Panc1 (cell line): ENCODE measurements at regions of chr11 and their contacts with region 1.

Region 1: DNA sequence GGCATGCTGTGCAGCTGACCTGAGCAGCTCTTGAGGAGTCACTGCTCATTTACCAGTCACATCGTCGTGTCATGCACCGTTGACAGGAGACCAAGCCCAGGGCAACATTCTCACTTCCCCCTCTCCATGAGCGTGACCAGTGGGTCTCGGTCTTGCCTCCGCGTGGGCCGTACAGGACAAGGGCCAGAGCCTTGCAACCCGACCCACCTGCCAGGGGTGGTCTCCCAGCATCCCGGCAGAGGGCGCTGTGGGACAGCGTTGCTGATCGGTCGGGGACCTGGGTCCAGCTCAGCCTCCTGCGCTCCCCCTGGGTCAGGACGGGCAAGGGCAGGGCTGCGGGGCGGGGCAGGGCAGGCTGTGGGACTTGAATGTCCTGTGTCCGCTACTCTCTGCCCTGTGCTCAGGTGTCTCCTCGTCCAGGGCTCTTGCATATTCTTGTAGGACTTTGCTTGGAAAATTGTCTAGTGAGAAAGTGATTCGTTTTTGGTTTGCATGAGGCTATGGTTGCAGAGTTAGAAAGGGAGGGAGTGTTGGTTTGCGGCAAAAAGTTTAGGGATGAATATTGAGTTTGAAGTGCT is 16.2 kb downstream of the EIF4G2 start:
- DNase-seq: no peak
- ATAC-seq: peak; percentile 95
- H3K4me3 ChIP-seq: peak overlapping the region in 1 of 2 experiments; percentile 40; a peak in 2 of 4 replicates
- H3K27ac ChIP-seq: peak overlapping the region; percentile 46; the same call in 1 of the 2 replicates
- H3K4me1 ChIP-seq: peaks cover 20% of the 10 kb centered on the region
- H3K27me3 ChIP-seq: no peaks in the 10 kb centered on the region
- CTCF ChIP-seq: peak; percentile 100

Region 2: DNA sequence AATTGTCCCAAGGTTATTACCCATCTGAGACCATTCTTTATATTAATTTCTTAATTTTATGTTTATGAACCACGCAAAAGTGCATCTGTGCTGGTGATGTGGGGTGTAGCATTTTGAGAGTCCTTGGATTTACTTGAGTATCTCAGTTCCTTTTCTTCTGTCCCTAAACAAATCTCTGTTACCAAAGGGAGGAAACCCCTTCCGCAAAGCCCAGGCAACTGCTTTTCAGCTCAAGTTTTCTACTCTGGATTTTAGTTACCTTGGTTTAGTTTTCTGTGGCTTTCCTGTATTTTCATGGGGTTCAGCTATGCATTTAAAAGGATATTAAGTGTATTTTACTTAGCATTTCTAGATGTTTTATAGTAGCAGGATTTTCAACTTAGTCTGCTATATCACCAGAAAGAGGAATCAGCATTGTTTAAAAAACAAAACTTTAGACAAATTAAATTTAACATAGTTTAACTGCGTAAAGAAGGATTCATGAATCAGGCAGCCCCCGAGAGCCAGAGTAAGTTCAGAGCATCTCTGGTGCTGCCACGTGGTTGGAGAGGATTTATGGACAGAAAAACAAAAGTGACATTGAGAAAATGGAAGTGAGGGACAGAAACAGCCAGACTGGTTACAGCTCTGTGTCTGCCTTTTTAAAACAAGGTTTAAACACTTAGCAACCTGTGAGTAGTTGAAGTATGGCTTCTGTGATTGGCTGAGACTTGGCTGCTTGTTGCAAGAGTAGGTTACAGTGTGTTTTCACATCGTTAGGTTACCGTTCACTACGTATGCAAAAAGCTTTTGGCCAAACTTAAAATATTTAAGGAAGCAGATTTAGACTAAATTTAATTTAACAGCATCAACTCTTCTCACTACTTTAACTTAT is 478.1 kb before region 1 on chr11:
- CTCF ChIA-PET with region 1: no interaction called
- POLR2A ChIA-PET with region 1: interaction called, 11 read pairs
- in situ Hi-C with region 1: no loop called
- intact Hi-C with region 1: no loop called
- DNase-seq: no peak
- ATAC-seq: peak; percentile 95
- H3K4me3 ChIP-seq: peak overlapping the region; percentile 7 to 38; a peak in 3 of 4 replicates
- H3K27ac ChIP-seq: peak overlapping the region; percentile 88
- H3K4me1 ChIP-seq: peaks cover 52% of the 10 kb centered on the region
- H3K27me3 ChIP-seq: no peaks in the 10 kb centered on the region
- CTCF ChIP-seq: no peak

Region 3: DNA sequence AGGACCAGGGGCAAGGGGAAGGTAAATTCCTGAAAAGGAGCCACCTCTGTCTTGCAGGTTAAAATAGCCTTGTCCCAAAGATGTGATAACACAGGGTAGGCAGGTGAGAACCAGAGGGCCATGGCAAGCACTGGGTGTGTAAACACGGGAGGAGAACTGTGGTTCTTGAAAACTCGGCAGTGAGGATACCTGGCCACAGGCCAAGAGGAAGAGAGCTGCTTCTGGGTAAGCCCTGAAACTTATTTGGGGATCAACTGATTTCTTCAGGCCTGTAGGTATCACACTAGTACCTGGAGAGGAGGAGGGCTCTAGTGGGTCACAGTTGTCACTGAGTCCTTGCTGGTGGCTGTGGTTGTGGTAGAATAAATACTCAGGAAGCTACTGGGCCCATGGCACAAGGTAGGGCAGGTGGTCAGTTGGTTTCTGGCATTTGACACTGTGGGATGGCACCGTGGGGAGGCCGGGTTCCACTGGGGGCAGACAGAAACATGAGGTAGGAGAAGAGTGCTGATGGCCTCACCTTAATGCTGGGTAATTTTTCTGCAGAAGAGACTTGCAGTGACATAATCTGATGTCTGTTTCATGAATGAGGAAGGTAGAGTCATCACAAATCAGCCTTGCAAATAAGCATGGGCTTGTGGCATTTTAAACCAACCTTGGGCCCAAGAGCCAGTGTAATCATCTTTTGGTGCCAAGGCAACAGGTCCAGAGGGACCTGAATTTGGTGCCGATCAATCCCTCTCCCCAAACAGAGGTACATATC is 315.4 kb before region 1 on chr11:
- CTCF ChIA-PET with region 1: no interaction called
- POLR2A ChIA-PET with region 1: interaction called, 10 read pairs
- in situ Hi-C with region 1: no loop called
- intact Hi-C with region 1: no loop called
- DNase-seq: no peak
- ATAC-seq: 0 out of 2 replicates have a peak, but pooled peaks have one; percentile 26
- H3K4me3 ChIP-seq: no peak overlapping the region
- H3K27ac ChIP-seq: no peak overlapping the region
- H3K4me1 ChIP-seq: no peaks in the 10 kb centered on the region
- H3K27me3 ChIP-seq: no peaks in the 10 kb centered on the region
- CTCF ChIP-seq: no peak

Region 4: GRCh38 chr11:10750838-10751580 is 41.5 kb before region 1 on chr11 and contains the start of gene CTR9:
- CTCF ChIA-PET with region 1: interaction called, 16 read pairs
- POLR2A ChIA-PET with region 1: no interaction called
- in situ Hi-C with region 1: no loop called
- intact Hi-C with region 1: no loop called
- DNase-seq: peak; percentile 94
- ATAC-seq: peak; percentile 99
- H3K4me3 ChIP-seq: peak within 1 kb of the TSS; percentile 71 to 93
- H3K27ac ChIP-seq: peak within 1 kb of the TSS; percentile 95
- H3K4me1 ChIP-seq: peaks cover 12% of the 10 kb centered on the region
- H3K27me3 ChIP-seq: no peaks in the 10 kb centered on the region
- CTCF ChIP-seq: peak; percentile 52
- total RNA-seq, gene CTR9: 60.1 TPM

Region 5: DNA sequence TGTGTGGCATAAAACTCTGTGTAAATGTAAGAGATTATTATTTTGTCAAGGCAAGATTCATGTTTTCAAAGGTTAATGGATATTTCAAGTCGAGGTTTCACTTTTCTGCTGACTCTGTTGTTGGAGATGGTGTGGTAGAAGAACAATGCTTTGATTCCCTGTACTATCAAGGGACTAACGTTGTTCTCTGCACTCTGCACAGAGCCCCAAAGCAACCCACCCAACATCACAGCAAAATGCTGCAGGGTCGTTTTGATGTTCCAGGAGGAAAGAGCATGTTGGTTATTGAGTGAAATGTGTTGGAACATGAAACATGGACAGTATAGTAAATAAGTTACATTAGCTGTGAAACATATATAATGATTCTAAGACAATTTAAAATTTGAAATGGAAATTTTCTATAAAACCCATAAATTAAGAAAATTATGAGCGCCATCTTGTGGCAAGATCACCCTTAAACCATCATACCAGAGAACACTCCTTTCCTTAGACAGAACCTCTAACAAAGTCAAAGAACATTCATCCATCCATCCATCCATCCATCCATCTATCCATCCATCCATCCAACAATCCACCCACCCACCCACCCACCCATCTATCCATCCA is 229.7 kb after region 1 on chr11:
- CTCF ChIA-PET with region 1: interaction called, 8 read pairs
- POLR2A ChIA-PET with region 1: interaction called, 3 read pairs
- in situ Hi-C with region 1: no loop called
- intact Hi-C with region 1: loop called (anchors 1 kb)
- DNase-seq: no peak
- ATAC-seq: peak; percentile 70; the same call in 1 of the 2 replicates
- H3K4me3 ChIP-seq: no peak overlapping the region
- H3K27ac ChIP-seq: peak overlapping the region; percentile 69; the same call in 1 of the 2 replicates
- H3K4me1 ChIP-seq: 0 out of 2 replicates have a peak, but pooled peaks cover 5% of the 10 kb centered on the region
- H3K27me3 ChIP-seq: no peaks in the 10 kb centered on the region
- CTCF ChIP-seq: peak; percentile 73

Region 6: DNA sequence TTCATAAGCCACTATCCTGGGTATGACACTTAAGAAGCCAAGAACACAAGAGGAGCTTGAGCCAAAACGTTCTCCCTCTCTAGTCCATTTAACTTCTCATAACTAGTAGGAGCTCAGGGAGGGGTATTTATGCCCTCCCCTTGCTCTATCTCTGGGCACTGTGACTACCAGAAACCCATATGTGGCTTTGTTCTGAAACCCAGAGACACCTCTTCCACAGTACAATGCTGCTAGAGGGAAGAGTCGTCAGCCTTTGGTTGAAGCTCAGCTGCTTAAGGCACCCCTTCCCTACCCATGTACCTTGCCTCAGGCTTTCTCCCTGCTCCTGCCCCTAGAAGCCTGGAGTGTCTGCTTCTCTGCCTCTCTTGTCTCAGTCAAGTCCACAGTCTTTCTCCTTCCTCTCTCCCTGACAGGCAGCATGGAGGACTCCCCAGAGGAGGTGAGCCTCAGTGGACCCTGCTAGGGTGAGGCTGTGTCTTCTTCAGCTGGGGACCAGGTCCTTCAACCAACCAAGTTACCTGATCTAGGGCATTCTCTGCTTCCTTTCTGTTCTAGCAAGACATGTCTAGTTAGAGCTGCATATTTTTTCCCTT is 1026.1 kb after region 1 on chr11:
- CTCF ChIA-PET with region 1: interaction called, 11 read pairs
- POLR2A ChIA-PET with region 1: no interaction called
- in situ Hi-C with region 1: no loop called
- intact Hi-C with region 1: no loop called
- DNase-seq: no peak
- ATAC-seq: no peak
- H3K4me3 ChIP-seq: no peak overlapping the region
- H3K27ac ChIP-seq: no peak overlapping the region
- H3K4me1 ChIP-seq: no peaks in the 10 kb centered on the region
- H3K27me3 ChIP-seq: no peaks in the 10 kb centered on the region
- CTCF ChIP-seq: no peak